Sigmoid colon (tissue), 7 donors: ENCODE measurements at regions of chr18 and their contacts with region 1.

Region 1: GRCh38 chr18:36284671-36285295 is 12.7 kb upstream of the FHOD3 start:
- DNase-seq: no peak
- H3K4me3 ChIP-seq: no peak overlapping the region
- H3K27ac ChIP-seq: no peak overlapping the region
- H3K4me1 ChIP-seq: no peaks in the 10 kb centered on the region
- H3K27me3 ChIP-seq: no peaks in the 10 kb centered on the region
- CTCF ChIP-seq: peak; percentile 81 to 87 (median 84)
- EP300 ChIP-seq: no peak
- POLR2A ChIP-seq: no peak

Region 2: DNA sequence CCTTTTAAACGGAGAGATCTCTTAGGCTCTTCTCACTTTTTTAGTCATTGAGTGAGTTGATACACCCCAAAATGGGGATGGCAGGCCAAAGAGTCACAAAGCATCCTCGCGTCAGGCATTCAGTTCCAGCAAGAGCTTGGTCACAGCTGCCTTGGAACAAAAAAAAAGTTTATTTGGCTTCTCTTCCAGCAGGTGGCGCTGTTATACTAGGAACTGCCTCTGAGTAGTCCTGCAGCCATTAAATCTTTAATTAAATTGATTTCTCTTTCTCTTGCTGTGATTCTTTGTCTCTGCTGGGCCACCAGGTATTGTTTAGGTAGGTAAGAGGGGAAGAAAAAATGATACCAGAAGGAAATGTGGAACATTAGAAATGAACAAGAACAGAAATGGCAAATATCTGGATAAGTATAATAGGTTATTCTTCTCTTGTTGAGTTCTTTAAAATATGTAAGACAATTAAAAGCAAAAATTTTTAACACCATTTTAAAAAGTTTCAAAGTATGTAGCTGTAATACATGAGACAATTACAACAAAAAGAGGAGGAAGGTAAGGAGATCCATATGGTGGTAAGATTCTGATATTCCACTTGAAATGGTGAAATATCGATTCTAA is 528.2 kb before region 1 on chr18:
- intact Hi-C with region 1: loop called (anchors 5 kb)
- DNase-seq: no peak
- H3K4me3 ChIP-seq: no peak overlapping the region
- H3K27ac ChIP-seq: no peak overlapping the region
- H3K4me1 ChIP-seq: no peaks in the 10 kb centered on the region
- H3K27me3 ChIP-seq: no peaks in the 10 kb centered on the region
- CTCF ChIP-seq: peak; percentile 43 to 74 (median 54)
- EP300 ChIP-seq: no peak
- POLR2A ChIP-seq: no peak

Region 3: DNA sequence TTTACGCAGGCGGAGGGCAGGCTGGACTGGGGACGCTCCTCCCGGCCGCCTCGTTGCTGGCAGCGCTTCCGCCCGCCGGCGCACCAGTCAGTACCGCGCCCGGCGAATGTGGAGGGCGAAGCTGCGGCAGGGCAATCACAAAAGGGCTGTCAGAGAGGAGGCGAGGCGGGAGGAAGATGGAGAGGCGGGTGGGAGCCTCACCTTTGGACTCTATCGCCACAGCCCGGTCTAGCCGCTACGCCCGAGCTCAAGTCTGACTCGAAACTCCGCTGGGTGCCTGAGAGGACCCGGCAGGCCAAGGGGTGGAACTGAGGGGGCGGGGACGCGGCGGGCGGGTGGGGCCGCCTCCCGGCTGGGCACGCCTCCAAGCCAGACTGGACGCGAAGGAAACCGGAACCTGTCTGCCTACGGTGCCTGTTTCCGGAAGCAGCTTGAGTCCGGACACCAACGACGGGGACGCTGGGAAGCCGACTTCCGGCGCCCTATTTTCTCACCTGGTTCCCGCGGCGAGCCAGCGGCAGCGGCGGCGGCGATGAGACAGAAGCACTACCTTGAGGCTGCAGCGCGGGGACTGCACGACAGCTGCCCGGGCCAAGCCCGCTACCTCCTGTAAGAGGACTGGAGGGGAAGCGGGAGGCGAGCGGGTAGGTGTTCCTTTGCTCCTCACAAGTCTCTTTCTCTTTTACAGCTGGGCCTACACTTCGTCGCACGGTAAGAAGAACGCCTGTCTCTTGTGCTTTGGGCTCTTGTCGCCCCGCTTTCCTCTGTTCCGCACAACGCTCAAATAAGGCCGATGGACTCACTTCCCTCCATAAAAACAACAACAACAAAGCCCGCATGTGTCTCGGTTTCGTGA is 312.4 kb before region 1 on chr18 and contains the start of gene RMP24:
- intact Hi-C with region 1: no loop called
- DNase-seq: peak; percentile 98
- H3K4me3 ChIP-seq: peak within 1 kb of the TSS; percentile 72 to 92 (median 88)
- H3K27ac ChIP-seq: peak within 1 kb of the TSS; percentile 91 to 93 (median 92)
- H3K4me1 ChIP-seq: peaks cover 0 to 26% (median 23%) of the 10 kb centered on the region in 4 donors
- H3K27me3 ChIP-seq: no peaks in the 10 kb centered on the region
- CTCF ChIP-seq: no peak
- EP300 ChIP-seq: peak in 1 of 4 donors; percentile 65
- POLR2A ChIP-seq: peak in 1 of 2 donors; percentile 50

Region 4: DNA sequence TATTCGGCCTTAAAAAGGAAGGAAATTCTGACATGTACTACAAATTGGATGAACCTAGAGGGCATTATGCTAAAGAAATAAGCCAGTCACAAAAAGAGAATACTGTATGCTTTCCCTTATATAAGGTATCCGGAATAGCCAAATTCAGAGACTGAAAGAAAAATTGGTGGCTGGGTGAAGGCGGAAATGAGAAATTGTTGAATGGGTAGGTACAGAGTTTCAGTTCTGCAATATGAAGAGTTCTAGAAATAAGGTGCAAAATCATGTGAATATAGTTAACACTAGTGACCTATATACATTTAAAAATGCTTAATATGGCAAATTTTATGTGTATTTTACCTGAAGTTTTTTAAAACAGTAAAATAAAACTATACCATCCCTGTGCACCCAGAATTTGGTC is 269.2 kb before region 1 on chr18:
- intact Hi-C with region 1: loop called (anchors 2 kb)
- DNase-seq: no peak
- H3K4me3 ChIP-seq: no peak overlapping the region
- H3K27ac ChIP-seq: no peak overlapping the region
- H3K4me1 ChIP-seq: no peaks in the 10 kb centered on the region
- H3K27me3 ChIP-seq: no peaks in the 10 kb centered on the region
- CTCF ChIP-seq: no peak
- EP300 ChIP-seq: no peak
- POLR2A ChIP-seq: no peak

Region 5: GRCh38 chr18:36095936-36096519 is 188.8 kb before region 1 on chr18:
- intact Hi-C with region 1: loop called (anchors 1 kb)
- DNase-seq: no peak
- H3K4me3 ChIP-seq: no peak overlapping the region
- H3K27ac ChIP-seq: no peak overlapping the region
- H3K4me1 ChIP-seq: no peaks in the 10 kb centered on the region
- H3K27me3 ChIP-seq: peaks cover 0 to 4% (median 0%) of the 10 kb centered on the region in 3 donors
- CTCF ChIP-seq: peak; percentile 35 to 48 (median 42)
- EP300 ChIP-seq: no peak
- POLR2A ChIP-seq: no peak

Region 6: GRCh38 chr18:36255072-36255698 is 29.6 kb before region 1 on chr18:
- intact Hi-C with region 1: no loop called
- DNase-seq: no peak
- H3K4me3 ChIP-seq: no peak overlapping the region
- H3K27ac ChIP-seq: no peak overlapping the region
- H3K4me1 ChIP-seq: no peaks in the 10 kb centered on the region
- H3K27me3 ChIP-seq: no peaks in the 10 kb centered on the region
- CTCF ChIP-seq: no peak
- EP300 ChIP-seq: no peak
- POLR2A ChIP-seq: no peak

Region 7: GRCh38 chr18:37617623-37618022 is 1332.8 kb after region 1 on chr18:
- intact Hi-C with region 1: no loop called
- DNase-seq: no peak
- H3K4me3 ChIP-seq: no peak overlapping the region
- H3K27ac ChIP-seq: no peak overlapping the region
- H3K4me1 ChIP-seq: no peaks in the 10 kb centered on the region
- H3K27me3 ChIP-seq: no peaks in the 10 kb centered on the region
- CTCF ChIP-seq: no peak
- EP300 ChIP-seq: no peak
- POLR2A ChIP-seq: no peak

Region 8: DNA sequence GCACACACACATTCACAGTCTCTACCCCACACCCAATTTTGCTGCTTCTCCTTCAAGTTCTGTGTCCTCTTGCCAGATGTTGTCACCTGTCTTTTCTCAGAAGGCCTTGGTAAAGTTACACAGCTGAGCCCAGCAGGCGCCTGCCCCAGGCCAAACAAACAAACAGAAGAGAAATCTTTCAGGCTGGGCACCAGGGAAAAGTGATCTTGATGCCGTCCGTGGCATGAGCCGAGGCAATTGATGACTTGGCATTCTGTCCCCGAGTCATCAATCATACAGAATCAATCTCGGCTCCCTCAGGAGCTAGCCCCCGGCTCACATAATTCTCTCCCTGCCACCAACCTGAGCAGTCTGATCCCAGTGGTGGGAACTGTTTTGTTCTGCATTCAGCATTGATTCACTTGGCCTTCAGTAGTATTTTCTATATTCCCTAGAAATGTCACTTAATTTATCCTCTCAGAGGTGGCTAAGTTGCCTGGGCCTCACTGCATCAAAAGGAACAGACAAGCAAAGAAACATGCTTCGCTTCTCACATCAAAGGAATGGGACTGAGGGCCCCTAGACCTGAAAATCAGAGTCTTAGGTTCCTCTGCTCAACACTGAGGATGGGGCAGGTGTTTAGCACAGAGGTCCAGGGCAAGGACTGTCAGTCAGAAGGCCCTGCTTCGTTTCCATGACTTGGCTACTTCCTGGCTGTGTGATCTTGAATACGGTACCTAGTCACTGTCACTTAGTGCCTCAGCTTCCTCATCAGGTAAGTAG is 1559.6 kb after region 1 on chr18:
- intact Hi-C with region 1: no loop called
- DNase-seq: no peak
- H3K4me3 ChIP-seq: no peak overlapping the region
- H3K27ac ChIP-seq: no peak overlapping the region
- H3K4me1 ChIP-seq: no peaks in the 10 kb centered on the region
- H3K27me3 ChIP-seq: no peaks in the 10 kb centered on the region
- CTCF ChIP-seq: no peak
- EP300 ChIP-seq: no peak
- POLR2A ChIP-seq: no peak